Ascending aorta (tissue), 2 donors: ENCODE measurements at regions of chr18 and their contacts with region 1.

Region 1: GRCh38 chr18:31722369-31722957 is 38.1 kb upstream of the B4GALT6 start:
- DNase-seq: peak; percentile 16 to 89
- H3K4me3 ChIP-seq: no peak overlapping the region
- H3K27ac ChIP-seq: no peak overlapping the region
- H3K4me1 ChIP-seq: peaks cover 0 to 10% of the 10 kb centered on the region in 2 donors
- H3K27me3 ChIP-seq: no peaks in the 10 kb centered on the region
- CTCF ChIP-seq: peak; percentile 44 to 86 (median 79)

Region 2: DNA sequence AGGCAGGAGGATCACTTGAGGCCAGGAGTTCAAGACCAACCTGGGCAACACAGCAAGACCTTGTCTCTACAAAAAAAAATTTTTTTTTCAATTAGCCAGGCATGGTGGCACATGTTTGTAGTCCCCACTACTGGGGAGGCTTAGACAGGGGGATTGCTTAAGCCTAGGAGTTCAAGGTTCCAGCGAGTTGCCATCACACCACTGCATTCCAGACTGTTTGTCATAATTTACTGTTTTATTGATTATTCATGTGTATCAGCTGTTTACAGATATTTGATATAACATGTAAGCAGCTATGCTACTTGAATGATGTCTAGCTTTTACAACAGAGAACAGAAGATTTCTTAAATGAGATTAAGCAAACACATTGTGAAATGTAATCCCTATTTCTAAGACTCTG is 189.2 kb before region 1 on chr18:
- intact Hi-C with region 1: no loop called
- DNase-seq: no peak
- H3K4me3 ChIP-seq: no peak overlapping the region
- H3K27ac ChIP-seq: no peak overlapping the region
- H3K4me1 ChIP-seq: no peaks in the 10 kb centered on the region
- H3K27me3 ChIP-seq: no peaks in the 10 kb centered on the region
- CTCF ChIP-seq: no peak

Region 3: DNA sequence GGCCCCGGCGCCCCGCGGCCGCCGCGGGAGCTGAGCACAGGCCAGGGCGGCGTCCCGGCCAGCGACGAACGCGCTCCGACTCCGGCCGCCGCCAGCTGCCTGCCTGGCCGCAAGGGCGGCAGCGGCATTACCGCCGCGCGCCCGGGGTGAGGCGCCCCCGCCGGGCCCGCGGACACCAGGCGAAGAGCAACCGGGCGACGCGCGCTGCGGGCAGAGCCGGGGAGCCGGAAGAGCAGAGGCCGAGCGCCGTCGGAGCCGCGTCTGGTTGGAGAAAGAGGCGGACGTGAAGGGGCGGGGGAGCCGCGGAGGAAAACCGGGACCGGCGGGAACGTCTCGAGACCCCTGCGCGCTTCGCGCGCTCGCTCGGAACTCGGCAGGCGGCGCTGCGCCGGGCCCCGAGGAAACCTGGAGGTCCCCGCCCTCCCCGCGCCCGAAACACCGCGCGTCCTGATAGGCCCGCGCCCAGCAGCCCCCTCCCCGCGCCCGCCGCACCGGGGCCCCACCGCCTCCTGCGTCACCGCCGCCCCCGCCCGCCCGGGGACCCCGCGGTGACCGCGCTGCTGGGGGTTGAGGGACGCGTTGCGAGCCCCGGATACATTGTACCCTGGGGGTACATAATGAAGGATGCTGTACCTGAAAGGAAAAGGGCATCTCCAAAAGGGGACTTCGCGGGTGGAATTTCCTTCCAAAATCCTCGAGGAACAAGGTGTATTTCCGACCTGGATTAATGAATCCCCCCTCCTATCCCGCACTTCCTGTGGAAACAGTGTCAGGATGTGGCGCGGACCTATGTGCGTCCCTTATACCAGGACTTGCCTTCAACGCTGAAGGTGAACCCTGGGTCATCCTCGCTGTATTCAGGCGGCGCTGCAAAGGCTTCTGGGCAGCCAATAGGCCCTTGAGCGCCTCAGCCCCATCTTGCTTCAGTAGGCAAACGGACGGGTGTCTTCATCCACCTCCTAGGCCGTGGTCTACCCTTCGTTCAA is 37.1 kb before region 1 on chr18:
- intact Hi-C with region 1: loop called (anchors 2 kb)
- DNase-seq: peak in 1 of 2 donors; percentile 64
- H3K4me3 ChIP-seq: peak overlapping the region; percentile 78 to 80
- H3K27ac ChIP-seq: peak overlapping the region; percentile 20 to 61
- H3K4me1 ChIP-seq: peaks cover 0 to 3% of the 10 kb centered on the region in 2 donors
- H3K27me3 ChIP-seq: no peaks in the 10 kb centered on the region
- CTCF ChIP-seq: peak; percentile 14 to 31 (median 15)

Region 4: DNA sequence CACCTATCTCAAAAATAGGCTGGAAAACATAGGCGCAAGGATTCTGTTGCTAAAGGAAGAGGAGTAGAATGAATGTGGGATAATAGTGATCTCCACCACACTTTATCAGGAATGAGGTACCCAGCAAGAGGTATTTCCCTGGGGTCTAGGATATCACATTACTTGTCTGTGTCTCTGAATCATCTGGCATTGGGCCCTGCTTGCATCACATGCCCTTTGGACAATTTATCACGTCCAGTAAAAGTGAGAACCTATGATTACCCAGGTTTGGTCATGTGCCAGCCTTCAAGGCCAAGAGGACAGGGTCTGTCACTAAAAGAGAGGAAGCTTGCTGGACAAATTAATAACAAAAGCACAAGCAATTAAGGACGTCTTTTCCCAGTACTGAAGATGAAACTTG is 231.9 kb after region 1 on chr18:
- intact Hi-C with region 1: loop called (anchors 5 kb)
- DNase-seq: no peak
- H3K4me3 ChIP-seq: no peak overlapping the region
- H3K27ac ChIP-seq: no peak overlapping the region
- H3K4me1 ChIP-seq: no peaks in the 10 kb centered on the region
- H3K27me3 ChIP-seq: no peaks in the 10 kb centered on the region
- CTCF ChIP-seq: no peak

Region 5: DNA sequence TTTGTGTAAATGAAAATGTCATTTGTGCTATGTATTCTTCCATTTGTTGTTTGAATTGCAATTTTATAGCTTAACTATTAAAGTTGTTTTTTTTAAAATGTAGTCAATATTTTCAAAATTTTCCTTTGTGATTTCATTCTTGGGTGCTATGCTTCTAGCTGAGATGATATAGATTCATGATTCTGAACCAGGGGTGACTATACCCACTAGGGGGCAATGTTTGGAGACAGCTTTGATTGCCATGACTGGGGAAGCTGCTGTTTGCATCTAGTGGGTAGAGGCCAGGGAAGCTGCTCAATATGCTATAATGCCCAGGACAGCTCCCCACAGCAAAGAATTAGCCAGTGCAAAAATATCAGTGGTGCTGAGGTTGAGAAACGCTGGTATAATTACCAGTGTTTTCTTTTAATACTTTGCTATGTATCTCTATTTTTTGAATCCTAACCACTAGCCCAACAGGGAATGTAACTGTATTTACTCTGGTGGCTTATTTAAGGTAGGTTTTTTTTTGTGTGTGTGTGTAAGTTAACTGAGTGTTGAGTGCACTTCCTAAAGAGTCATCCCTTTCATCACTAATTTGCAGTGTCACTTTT is 567.1 kb after region 1 on chr18:
- intact Hi-C with region 1: no loop called
- DNase-seq: no peak
- H3K4me3 ChIP-seq: no peak overlapping the region
- H3K27ac ChIP-seq: no peak overlapping the region
- H3K4me1 ChIP-seq: peaks cover 0 to 22% of the 10 kb centered on the region in 2 donors
- H3K27me3 ChIP-seq: no peaks in the 10 kb centered on the region
- CTCF ChIP-seq: peak; percentile 15 to 50 (median 41)